ENCODE measurements at regions of chr6 and their contacts with region 1.

Region 1: DNA sequence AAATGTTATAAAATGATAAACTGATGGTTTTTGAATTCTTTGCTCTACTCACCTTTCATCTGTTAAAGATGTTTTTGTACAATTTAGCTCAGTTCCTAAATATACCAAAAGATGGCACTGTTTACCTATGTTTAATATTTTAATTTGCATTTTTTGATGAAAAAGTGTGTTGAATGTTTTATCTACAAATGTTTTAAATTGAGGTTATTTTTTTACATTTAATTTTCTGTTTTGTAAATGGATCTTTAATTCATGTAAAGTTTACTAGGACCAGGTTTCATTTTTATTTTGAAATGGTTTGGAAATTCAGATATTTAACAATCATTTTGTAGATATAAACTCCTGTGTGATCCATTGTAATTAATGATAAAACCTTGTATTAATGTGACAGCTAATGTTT is 30.0 kb downstream of the CDKAL1 start:
- DNase-seq: no peak
- ATAC-seq: no peak
- H3K4me3 Mint-ChIP-seq: no peak overlapping the region
- H3K27ac Mint-ChIP-seq: no peak overlapping the region
- H3K4me1 Mint-ChIP-seq: peaks cover 11% of the 10 kb centered on the region
- H3K27me3 Mint-ChIP-seq: no peaks in the 10 kb centered on the region

Region 2: GRCh38 chr6:20575125-20575524 is 10.9 kb after region 1 on chr6:
- CTCF ChIA-PET with region 1: interaction called, 12 read pairs
- POLR2A ChIA-PET with region 1: no interaction called
- intact Hi-C with region 1: no loop called
- DNase-seq: no peak
- ATAC-seq: no peak
- H3K4me3 Mint-ChIP-seq: no peak overlapping the region
- H3K27ac Mint-ChIP-seq: no peak overlapping the region
- H3K4me1 Mint-ChIP-seq: peaks cover 27% of the 10 kb centered on the region
- H3K27me3 Mint-ChIP-seq: no peaks in the 10 kb centered on the region